Panc1 (cell line): ENCODE measurements at regions of chr15 and their contacts with region 1.

Region 1: GRCh38 chr15:88894348-88894818 is 961 bp downstream of the HAPLN3 start:
- DNase-seq: no peak
- ATAC-seq: peak; percentile 53
- H3K4me3 ChIP-seq: peak overlapping the region; percentile 55 to 71
- H3K27ac ChIP-seq: peak overlapping the region; percentile 78
- H3K4me1 ChIP-seq: peaks cover 47% of the 10 kb centered on the region
- H3K27me3 ChIP-seq: no peaks in the 10 kb centered on the region
- CTCF ChIP-seq: peak; percentile 97

Region 2: DNA sequence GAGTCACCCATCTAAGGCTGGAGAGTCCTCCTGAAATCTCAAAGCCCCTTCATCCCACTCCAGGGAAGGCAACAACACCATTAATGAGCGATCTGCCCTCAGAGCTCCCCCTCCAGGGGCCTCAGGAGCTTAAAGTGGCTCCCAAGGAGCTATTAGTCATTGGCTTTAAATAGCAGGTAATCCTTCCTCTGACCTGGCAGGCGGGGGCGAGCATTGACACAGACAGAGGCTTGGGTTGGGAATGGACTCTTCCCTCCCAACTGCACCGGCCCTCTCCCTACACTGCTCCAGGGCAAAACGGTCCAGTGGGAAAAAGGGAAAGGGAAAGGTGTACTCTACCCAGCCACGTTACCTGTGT is 17.4 kb after region 1 on chr15:
- CTCF ChIA-PET with region 1: no interaction called
- POLR2A ChIA-PET with region 1: no interaction called
- in situ Hi-C with region 1: no loop called
- intact Hi-C with region 1: no loop called
- DNase-seq: no peak
- ATAC-seq: peak; percentile 9; the same call in 1 of the 2 replicates
- H3K4me3 ChIP-seq: peak overlapping the region; percentile 66 to 90
- H3K27ac ChIP-seq: peak overlapping the region; percentile 97
- H3K4me1 ChIP-seq: peaks cover 50% of the 10 kb centered on the region
- H3K27me3 ChIP-seq: no peaks in the 10 kb centered on the region
- CTCF ChIP-seq: no peak

Region 3: DNA sequence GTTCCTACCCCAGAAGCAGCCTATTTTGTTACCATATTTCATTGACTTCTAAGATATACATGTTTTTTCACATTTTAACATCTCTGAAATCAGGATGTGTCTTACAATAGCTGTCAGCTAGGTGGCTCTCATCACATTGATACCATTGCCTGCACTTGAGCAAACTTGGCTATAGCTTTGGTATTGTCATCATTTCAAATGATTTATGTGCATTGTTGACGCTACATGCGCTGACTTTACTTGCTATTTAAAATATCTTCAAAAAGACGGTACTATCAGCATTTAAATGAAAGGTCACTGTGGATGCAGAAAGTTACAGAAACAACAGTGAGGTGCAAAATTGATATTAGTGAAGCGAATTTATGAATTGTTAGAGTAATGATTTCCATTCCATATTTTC is 139.9 kb after region 1 on chr15:
- CTCF ChIA-PET with region 1: no interaction called
- POLR2A ChIA-PET with region 1: interaction called, 11 read pairs
- in situ Hi-C with region 1: no loop called
- intact Hi-C with region 1: no loop called
- DNase-seq: no peak
- ATAC-seq: peak; percentile 71
- H3K4me3 ChIP-seq: no peak overlapping the region
- H3K27ac ChIP-seq: no peak overlapping the region
- H3K4me1 ChIP-seq: peaks cover 4% of the 10 kb centered on the region; the same call in 1 of the 2 replicates
- H3K27me3 ChIP-seq: no peaks in the 10 kb centered on the region
- CTCF ChIP-seq: peak; percentile 66; the same call in 1 of the 2 replicates

Region 4: GRCh38 chr15:89177633-89178306 is 283.4 kb after region 1 on chr15:
- CTCF ChIA-PET with region 1: interaction called, 6 read pairs
- POLR2A ChIA-PET with region 1: interaction called, 3 read pairs
- in situ Hi-C with region 1: no loop called
- intact Hi-C with region 1: loop called (anchors 5 kb)
- DNase-seq: peak; percentile 36
- ATAC-seq: peak; percentile 80
- H3K4me3 ChIP-seq: no peak overlapping the region
- H3K27ac ChIP-seq: no peak overlapping the region; the same call in none of the 2 replicates
- H3K4me1 ChIP-seq: no peaks in the 10 kb centered on the region
- H3K27me3 ChIP-seq: no peaks in the 10 kb centered on the region
- CTCF ChIP-seq: peak; percentile 91

Region 5: DNA sequence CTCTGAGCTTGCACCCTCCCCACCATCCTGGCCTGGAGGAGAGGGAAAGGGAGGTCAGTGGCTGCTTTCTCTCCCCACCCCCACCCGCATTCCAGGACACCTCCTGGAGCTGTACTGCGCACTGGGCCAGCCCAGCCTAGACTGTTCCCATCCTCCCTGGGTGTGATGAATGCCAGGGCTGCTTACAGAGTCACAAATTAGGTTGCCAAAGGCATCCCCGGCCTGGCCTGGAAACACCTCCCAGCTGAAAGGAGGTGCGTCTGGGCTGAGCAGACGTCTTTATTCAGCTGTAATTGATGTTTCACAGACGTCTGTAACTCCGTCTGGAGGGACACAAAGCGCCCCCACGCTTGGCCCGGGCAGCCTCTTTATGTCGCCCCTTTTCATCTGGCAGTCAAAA is 554.4 kb after region 1 on chr15:
- CTCF ChIA-PET with region 1: no interaction called
- POLR2A ChIA-PET with region 1: no interaction called
- in situ Hi-C with region 1: no loop called
- intact Hi-C with region 1: no loop called
- DNase-seq: no peak
- ATAC-seq: no peak
- H3K4me3 ChIP-seq: no peak overlapping the region
- H3K27ac ChIP-seq: no peak overlapping the region
- H3K4me1 ChIP-seq: no peaks in the 10 kb centered on the region
- H3K27me3 ChIP-seq: no peaks in the 10 kb centered on the region
- CTCF ChIP-seq: no peak